ENCODE measurements at regions of chr2 and their contacts with region 1.

Region 1: GRCh38 chr2:85999061-85999831 is 106.4 kb downstream of the POLR1A start:
- DNase-seq: peak; percentile 74
- H3K4me3 Mint-ChIP-seq: peak overlapping the region; percentile 3
- H3K27ac Mint-ChIP-seq: peak overlapping the region; percentile 91
- H3K4me1 Mint-ChIP-seq: peaks cover 74% of the 10 kb centered on the region
- H3K27me3 Mint-ChIP-seq: no peaks in the 10 kb centered on the region

Region 2: DNA sequence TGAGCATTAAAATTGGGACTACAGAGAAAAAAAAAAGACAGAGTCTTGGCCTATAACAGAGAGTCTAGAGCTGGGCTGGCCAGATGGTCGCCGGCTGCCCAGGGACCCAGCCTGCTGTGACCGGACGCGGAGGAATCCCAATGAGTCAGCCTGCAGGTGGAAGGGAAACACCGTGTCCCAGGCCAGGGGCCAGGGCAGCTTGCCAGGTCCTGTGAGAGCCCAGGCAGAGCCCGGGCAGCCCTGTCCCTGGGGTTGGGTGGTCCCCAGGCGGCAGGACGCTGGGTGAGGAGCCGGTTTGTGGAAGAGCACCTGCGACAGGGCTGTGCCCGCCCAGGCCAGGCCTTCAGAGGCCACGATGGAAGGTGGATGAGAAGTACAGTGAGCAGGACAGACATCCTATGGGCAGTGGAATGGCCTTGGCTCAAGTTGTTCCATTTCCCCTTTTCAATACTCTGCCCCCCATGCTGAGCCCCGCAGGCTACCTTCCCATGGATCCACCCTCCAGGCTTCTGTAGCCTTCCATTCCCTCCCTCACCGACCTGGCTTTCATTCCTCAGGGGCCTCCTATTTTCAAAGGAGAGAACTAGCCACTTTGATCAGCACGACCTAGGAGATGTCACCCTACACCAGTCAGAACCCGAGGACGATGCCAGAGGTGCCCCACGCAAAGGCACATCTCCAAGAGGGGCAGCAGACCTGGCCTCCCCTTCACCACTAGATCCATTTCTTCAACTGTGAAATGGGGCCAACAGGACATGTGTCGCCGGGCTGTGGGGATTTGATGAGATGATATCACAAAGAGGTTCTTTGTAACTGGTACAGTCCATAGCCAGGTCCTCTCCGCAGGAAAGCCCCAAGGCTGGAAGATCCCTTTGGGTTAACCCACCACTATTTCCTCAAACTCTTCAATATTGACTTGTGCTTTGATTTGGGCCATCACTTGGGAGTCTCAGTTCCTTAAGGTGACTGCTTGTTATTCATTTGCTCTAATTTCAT is 19.0 kb after region 1 on chr2:
- CTCF ChIA-PET with region 1: interaction called, 5 read pairs
- POLR2A ChIA-PET with region 1: interaction called, 18 read pairs
- DNase-seq: no peak
- H3K4me3 Mint-ChIP-seq: no peak overlapping the region
- H3K27ac Mint-ChIP-seq: peak overlapping the region; percentile 89
- H3K4me1 Mint-ChIP-seq: peaks cover 33% of the 10 kb centered on the region
- H3K27me3 Mint-ChIP-seq: no peaks in the 10 kb centered on the region

Region 3: DNA sequence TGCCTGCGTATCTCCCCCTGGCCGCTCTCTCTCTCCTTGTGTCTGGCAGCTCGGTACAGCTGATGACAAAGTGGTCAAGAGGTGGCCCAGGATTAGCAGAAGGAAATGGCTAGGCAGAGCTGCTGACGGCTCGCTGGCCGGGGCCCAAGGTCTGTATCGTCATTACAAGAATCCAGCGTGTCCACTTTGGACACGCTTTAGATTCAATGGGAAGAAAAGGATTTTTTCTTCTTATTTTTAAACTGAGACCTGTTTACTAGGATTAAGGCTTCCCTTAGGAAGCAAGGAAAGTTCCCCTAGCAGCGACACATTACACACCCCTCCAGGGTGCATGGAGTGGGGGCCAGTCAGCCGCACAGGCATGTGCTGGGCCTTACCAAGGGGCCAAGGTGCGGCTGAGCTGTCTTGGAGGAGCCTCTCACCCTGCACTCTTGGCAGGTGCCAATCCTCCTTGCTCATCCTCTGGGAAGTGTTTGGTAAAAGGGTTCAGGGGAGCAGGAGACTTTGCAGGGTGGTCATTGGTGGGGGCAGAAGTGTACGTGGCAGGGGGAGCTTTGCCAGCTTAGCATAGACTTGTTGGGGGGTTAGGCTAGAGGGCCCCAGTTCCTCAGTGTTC is 29.6 kb after region 1 on chr2:
- CTCF ChIA-PET with region 1: no interaction called
- POLR2A ChIA-PET with region 1: no interaction called
- DNase-seq: no peak
- H3K4me3 Mint-ChIP-seq: no peak overlapping the region
- H3K27ac Mint-ChIP-seq: no peak overlapping the region
- H3K4me1 Mint-ChIP-seq: peaks cover under 1% of the 10 kb centered on the region
- H3K27me3 Mint-ChIP-seq: no peaks in the 10 kb centered on the region